ENCODE measurements at regions of chr11 and their contacts with region 1.

Region 1: DNA sequence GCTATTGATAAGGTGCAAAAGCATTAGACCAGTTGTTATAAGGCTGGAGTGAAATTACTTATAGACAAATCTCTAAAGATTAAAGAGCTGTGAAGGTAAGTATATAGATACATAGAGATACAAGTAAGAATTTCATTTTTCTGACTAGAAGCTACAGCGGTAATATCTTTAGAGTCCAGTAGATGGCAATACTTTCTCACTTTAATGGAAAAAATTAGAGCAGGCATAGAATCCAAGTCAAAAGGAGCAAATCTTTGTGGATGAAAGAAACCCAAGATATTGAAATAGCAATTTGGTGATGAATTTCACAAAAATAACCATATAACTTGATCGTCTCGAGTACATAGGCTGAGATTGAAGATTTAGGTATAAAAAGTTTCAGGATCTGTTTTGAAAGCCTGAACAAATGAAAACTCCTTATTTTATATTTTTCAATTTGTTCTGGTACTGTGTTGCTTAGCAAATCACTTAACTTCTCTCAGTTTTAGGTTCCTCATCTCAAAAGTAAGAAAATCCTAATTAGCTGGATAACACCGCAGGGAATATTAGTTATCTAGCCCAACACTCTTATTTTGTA is 81.9 kb downstream of the UVRAG start:
- DNase-seq: peak in 1 of 2 experiments; percentile 56
- H3K4me3 ChIP-seq: no peak overlapping the region
- H3K4me3 Mint-ChIP-seq: no peak overlapping the region
- H3K27ac Mint-ChIP-seq: no peak overlapping the region
- H3K4me1 ChIP-seq: no peaks in the 10 kb centered on the region
- H3K4me1 Mint-ChIP-seq: no peaks in the 10 kb centered on the region
- H3K27me3 ChIP-seq: no peaks in the 10 kb centered on the region
- H3K27me3 Mint-ChIP-seq: no peaks in the 10 kb centered on the region
- CTCF ChIP-seq: peak; percentile 68 to 81

Region 2: DNA sequence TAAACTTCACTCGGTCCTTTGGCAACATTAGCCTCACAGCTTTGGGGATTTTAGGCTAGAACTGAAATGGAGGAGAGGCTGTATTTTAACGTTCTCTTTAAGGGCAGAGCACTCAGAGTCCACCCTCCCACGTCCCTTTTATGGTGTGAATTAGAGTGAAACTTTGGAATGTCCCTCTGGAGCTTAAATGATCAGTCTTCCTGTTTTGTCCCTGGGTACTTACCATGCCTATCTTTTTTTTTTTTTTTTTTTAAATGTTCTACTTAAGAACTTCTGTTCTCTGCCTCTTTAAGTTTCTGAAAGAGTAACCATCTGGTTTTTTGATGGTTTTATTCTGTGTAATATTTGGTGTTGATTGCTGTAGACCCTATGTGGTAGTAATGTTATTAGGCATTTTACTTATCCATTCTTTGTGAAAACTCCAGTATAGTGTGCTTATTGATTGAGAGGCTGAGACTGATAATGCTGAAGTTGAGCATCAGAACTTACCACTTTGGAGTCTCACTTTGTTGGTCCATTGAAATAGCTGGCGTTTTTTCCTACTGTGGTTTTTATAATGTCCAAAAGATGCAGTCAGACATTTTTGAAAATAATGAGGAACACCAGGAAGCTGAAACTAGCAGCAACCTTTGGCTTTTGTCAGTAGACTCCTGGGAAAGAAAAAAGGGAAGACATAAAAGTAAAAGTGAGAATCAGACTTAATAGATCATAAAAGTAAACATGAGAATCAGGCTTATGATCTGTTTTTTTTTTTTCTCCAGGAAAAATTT is 70.3 kb before region 1 on chr11:
- CTCF ChIA-PET with region 1: no interaction called
- POLR2A ChIA-PET with region 1: no interaction called
- intact Hi-C with region 1: no loop called
- DNase-seq: no peak
- H3K4me3 ChIP-seq: no peak overlapping the region
- H3K4me3 Mint-ChIP-seq: no peak overlapping the region
- H3K27ac Mint-ChIP-seq: peak overlapping the region; percentile 19
- H3K4me1 ChIP-seq: peaks cover 8% of the 10 kb centered on the region; the same call in 1 of the 2 replicates
- H3K4me1 Mint-ChIP-seq: peaks cover 18% of the 10 kb centered on the region
- H3K27me3 ChIP-seq: no peaks in the 10 kb centered on the region
- H3K27me3 Mint-ChIP-seq: no peaks in the 10 kb centered on the region
- CTCF ChIP-seq: no peak

Region 3: GRCh38 chr11:76030286-76030685 is 133.4 kb after region 1 on chr11:
- CTCF ChIA-PET with region 1: no interaction called
- POLR2A ChIA-PET with region 1: no interaction called
- intact Hi-C with region 1: loop called (anchors 5 kb)
- DNase-seq: peak; percentile 53 to 66
- H3K4me3 ChIP-seq: no peak overlapping the region
- H3K4me3 Mint-ChIP-seq: peak overlapping the region; percentile 0
- H3K27ac Mint-ChIP-seq: peak overlapping the region; percentile 30
- H3K4me1 ChIP-seq: peaks cover 22% of the 10 kb centered on the region
- H3K4me1 Mint-ChIP-seq: peaks cover 25% of the 10 kb centered on the region
- H3K27me3 ChIP-seq: no peaks in the 10 kb centered on the region
- H3K27me3 Mint-ChIP-seq: no peaks in the 10 kb centered on the region
- CTCF ChIP-seq: no peak

Region 4: DNA sequence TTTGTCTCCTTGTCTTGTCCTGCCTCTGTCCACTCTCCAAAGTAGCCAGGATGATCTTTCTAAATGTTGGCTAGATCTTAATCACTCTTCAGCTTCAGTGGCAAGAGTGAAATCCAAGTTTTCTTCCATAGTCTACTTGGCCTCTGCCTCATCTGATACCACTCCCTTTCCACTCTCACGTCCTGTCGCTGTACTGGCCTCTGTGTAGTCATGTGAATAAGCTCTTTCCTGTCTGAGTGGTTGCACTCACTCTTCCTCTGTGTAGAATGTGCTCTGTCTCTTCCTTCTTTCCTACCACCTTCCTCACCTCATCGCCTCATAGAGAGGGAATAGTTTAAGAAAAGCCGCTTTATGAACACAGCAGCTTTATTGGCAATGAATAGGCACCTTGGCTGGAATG is 222.8 kb after region 1 on chr11:
- CTCF ChIA-PET with region 1: interaction called, 5 read pairs
- POLR2A ChIA-PET with region 1: no interaction called
- intact Hi-C with region 1: loop called (anchors 1 kb)
- DNase-seq: no peak
- H3K4me3 ChIP-seq: no peak overlapping the region
- H3K4me3 Mint-ChIP-seq: no peak overlapping the region
- H3K27ac Mint-ChIP-seq: no peak overlapping the region
- H3K4me1 ChIP-seq: peaks cover 7% of the 10 kb centered on the region
- H3K4me1 Mint-ChIP-seq: no peaks in the 10 kb centered on the region
- H3K27me3 ChIP-seq: no peaks in the 10 kb centered on the region
- H3K27me3 Mint-ChIP-seq: no peaks in the 10 kb centered on the region
- CTCF ChIP-seq: no peak

Measured in Caco-2 (cell line).